ENCODE measurements at regions of chr5 and their contacts with region 1.

Region 1: GRCh38 chr5:56200856-56201666 is 32.1 kb downstream of the ANKRD55 start:
- DNase-seq: peak; percentile 78
- ATAC-seq: peak; percentile 91
- H3K4me3 ChIP-seq: no peak overlapping the region
- H3K27ac ChIP-seq: no peak overlapping the region
- H3K4me1 ChIP-seq: peaks cover 2% of the 10 kb centered on the region; the same call in 1 of the 2 replicates
- H3K27me3 ChIP-seq: no peaks in the 10 kb centered on the region
- CTCF ChIP-seq: peak; percentile 83
- POLR2A ChIP-seq: no peak
- RAD21 ChIP-seq: peak; percentile 98

Region 2: GRCh38 chr5:55344392-55344992 is 856.6 kb before region 1 on chr5:
- CTCF ChIA-PET with region 1: no interaction called
- POLR2A ChIA-PET with region 1: no interaction called
- dilution Hi-C with region 1: no loop called
- in situ Hi-C with region 1: no loop called
- intact Hi-C with region 1: loop called (anchors 1 kb)
- DNase-seq: peak; percentile 70
- ATAC-seq: peak; percentile 83
- H3K4me3 ChIP-seq: no peak overlapping the region
- H3K27ac ChIP-seq: no peak overlapping the region
- H3K4me1 ChIP-seq: no peaks in the 10 kb centered on the region
- H3K27me3 ChIP-seq: no peaks in the 10 kb centered on the region
- CTCF ChIP-seq: peak; percentile 86
- POLR2A ChIP-seq: no peak
- RAD21 ChIP-seq: peak; percentile 66

Region 3: DNA sequence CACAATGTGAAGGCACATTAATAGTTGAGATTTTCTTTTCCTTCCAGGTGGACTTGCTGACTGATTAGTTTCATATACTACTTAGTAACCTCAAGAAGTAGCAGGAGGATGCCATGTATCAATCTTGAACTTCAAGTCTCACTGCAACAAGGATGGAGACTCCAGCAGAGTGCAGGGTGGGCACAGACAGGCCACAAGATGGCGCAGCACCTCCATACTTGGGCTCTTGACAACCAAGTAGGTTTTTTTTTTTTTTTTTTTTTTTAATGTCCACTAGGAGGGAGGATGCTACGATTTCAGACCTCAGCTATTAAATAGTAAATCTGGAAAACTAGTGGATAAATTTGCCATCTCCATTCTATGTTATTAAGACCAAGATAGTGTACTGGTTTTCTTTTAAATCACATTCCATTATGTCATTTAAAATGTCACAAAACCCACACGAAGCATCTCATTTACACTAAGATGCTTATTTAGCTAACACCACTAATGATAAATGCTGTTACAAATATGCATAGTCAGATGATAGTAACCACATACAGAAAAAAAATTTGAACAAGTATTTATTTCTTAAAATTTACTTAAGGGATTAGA is 264.9 kb before region 1 on chr5:
- CTCF ChIA-PET with region 1: interaction called, 5 read pairs
- POLR2A ChIA-PET with region 1: no interaction called
- dilution Hi-C with region 1: no loop called
- in situ Hi-C with region 1: no loop called
- intact Hi-C with region 1: loop called (anchors 1 kb)
- DNase-seq: peak; percentile 92
- ATAC-seq: peak; percentile 74
- H3K4me3 ChIP-seq: no peak overlapping the region
- H3K27ac ChIP-seq: no peak overlapping the region
- H3K4me1 ChIP-seq: no peaks in the 10 kb centered on the region
- H3K27me3 ChIP-seq: no peaks in the 10 kb centered on the region
- CTCF ChIP-seq: peak; percentile 91
- POLR2A ChIP-seq: no peak
- RAD21 ChIP-seq: peak; percentile 83

Region 4: DNA sequence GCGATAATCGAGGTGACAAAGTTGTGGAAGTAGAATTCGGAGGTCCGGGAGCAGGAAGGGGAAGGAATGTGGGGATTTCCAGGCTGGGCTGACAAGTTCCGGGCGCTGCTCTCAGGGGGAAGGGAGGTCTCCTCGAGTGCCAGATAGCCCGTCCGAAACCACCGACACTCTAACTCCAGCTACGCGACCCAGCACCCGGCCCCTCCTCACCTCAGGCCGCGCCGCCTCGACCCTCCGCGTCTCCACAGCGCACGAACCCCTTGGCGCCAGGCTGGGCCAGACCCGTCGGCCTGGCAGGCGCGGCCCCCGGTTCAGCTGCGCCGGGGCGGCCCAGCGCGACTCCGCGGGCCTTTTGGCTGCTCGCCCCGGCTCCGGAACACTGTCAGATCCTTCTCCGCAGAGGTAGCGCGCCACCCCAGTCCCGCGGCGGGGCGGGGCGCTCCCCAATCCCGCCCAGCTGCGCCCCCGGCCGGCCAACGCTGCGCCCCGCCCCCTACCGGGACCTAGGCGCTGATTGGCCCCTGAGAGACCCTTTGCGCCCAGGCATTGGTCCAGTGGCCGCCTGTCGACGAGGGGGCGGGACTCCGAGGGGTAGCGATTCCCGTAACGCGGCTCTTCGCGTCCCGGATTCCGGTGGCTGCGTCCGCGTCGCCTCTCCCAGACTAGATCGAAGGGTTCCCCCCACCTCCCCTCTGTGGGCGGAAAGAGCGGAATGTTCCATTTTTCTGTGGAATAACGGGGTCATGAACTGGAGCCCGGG is 206.3 kb before region 1 on chr5 and contains the start of gene IL6ST:
- CTCF ChIA-PET with region 1: interaction called, 5 read pairs
- POLR2A ChIA-PET with region 1: no interaction called
- dilution Hi-C with region 1: no loop called
- in situ Hi-C with region 1: loop called (anchors 5 kb)
- intact Hi-C with region 1: loop called (anchors 2 kb)
- DNase-seq: peak; percentile 96
- ATAC-seq: peak; percentile 96
- H3K4me3 ChIP-seq: peak within 1 kb of the TSS; percentile 89
- H3K27ac ChIP-seq: peak within 1 kb of the TSS; percentile 100
- H3K4me1 ChIP-seq: peaks cover 3% of the 10 kb centered on the region; the same call in 1 of the 2 replicates
- H3K27me3 ChIP-seq: no peaks in the 10 kb centered on the region
- CTCF ChIP-seq: 0 out of 2 replicates have a peak, but pooled peaks have one; percentile 22
- POLR2A ChIP-seq: peak; percentile 95
- RAD21 ChIP-seq: no peak; the same call in 1 of the 2 replicates
- total RNA-seq, gene IL6ST: 506 and 533 TPM in 2 replicates

Region 5: DNA sequence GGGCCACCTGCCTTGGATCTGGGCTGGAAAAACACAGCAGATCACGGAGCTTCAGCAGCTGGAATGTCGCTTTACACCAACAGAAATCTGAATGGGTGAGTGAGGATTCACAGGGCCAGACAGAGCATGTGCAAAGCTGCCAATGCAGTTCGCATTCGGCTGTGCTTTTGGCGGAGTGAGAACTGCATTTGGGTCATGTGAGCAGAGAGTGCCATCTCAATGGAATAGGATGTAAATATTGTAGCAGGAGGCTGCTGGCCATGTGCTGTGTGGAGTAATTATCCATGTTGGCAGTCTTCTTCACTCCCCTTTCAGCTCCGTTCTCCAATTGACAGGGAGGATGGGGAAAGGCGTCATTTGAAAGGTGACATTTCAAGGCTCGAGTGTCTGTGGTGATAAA is 32.2 kb after region 1 on chr5 and contains the start of gene ANKRD55:
- CTCF ChIA-PET with region 1: no interaction called
- POLR2A ChIA-PET with region 1: no interaction called
- dilution Hi-C with region 1: no loop called
- in situ Hi-C with region 1: no loop called
- intact Hi-C with region 1: no loop called
- DNase-seq: no peak
- ATAC-seq: no peak; the same call in none of the 2 replicates
- H3K4me3 ChIP-seq: no peak within 1 kb of the TSS
- H3K27ac ChIP-seq: no peak within 1 kb of the TSS
- H3K4me1 ChIP-seq: peaks cover 2% of the 10 kb centered on the region; the same call in 1 of the 2 replicates
- H3K27me3 ChIP-seq: peaks cover 6% of the 10 kb centered on the region; the same call in 1 of the 2 replicates
- CTCF ChIP-seq: no peak
- POLR2A ChIP-seq: no peak
- RAD21 ChIP-seq: no peak
- total RNA-seq, gene ANKRD55: 0.28 TPM in 1 of 2 replicates, not detected in the other

Region 6: DNA sequence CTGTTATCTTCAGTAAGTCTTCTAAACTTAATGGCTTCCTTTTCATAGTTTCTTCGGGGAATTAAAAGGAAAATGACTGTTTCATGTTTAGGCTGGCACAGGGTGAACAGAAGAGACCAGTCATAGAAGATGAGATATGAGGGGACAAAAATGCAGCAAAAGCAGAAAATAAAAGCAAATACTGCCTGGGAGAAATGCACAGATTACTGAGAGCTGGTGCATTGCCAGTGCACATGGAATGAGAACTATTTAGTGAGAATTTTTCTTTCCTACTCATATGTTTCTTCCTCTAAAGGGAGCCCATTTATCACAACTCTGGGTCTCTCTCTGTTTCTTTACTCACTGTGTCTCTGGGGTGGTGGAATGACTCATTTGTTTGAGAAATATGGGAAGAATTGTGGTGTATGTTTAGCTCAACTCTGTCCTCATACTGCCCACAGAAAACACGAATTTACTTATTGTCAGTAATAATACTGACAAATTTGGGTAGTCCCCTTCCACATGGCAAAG is 58.0 kb after region 1 on chr5:
- CTCF ChIA-PET with region 1: interaction called, 3 read pairs
- POLR2A ChIA-PET with region 1: no interaction called
- dilution Hi-C with region 1: no loop called
- in situ Hi-C with region 1: no loop called
- intact Hi-C with region 1: loop called (anchors 2 kb)
- DNase-seq: peak; percentile 97
- ATAC-seq: peak; percentile 96
- H3K4me3 ChIP-seq: peak overlapping the region; percentile 17; the same call in 1 of the 2 replicates
- H3K27ac ChIP-seq: peak overlapping the region; percentile 91
- H3K4me1 ChIP-seq: peaks cover 12% of the 10 kb centered on the region
- H3K27me3 ChIP-seq: no peaks in the 10 kb centered on the region
- CTCF ChIP-seq: no peak
- POLR2A ChIP-seq: no peak
- RAD21 ChIP-seq: no peak

Region 7: GRCh38 chr5:57137401-57137800 is 936.3 kb after region 1 on chr5:
- CTCF ChIA-PET with region 1: no interaction called
- POLR2A ChIA-PET with region 1: no interaction called
- dilution Hi-C with region 1: no loop called
- in situ Hi-C with region 1: no loop called
- intact Hi-C with region 1: no loop called
- DNase-seq: no peak
- ATAC-seq: no peak
- H3K4me3 ChIP-seq: no peak overlapping the region
- H3K27ac ChIP-seq: no peak overlapping the region
- H3K4me1 ChIP-seq: no peaks in the 10 kb centered on the region
- H3K27me3 ChIP-seq: peaks cover 1% of the 10 kb centered on the region; the same call in 1 of the 2 replicates
- CTCF ChIP-seq: no peak
- POLR2A ChIP-seq: no peak
- RAD21 ChIP-seq: no peak

Region 8: GRCh38 chr5:57468481-57469163 is 1267.6 kb after region 1 on chr5:
- CTCF ChIA-PET with region 1: no interaction called
- POLR2A ChIA-PET with region 1: no interaction called
- dilution Hi-C with region 1: no loop called
- in situ Hi-C with region 1: no loop called
- intact Hi-C with region 1: no loop called
- DNase-seq: peak; percentile 85
- ATAC-seq: peak; percentile 72
- H3K4me3 ChIP-seq: no peak overlapping the region
- H3K27ac ChIP-seq: peak overlapping the region; percentile 26; the same call in 1 of the 2 replicates
- H3K4me1 ChIP-seq: peaks cover 3% of the 10 kb centered on the region; the same call in 1 of the 2 replicates
- H3K27me3 ChIP-seq: no peaks in the 10 kb centered on the region
- CTCF ChIP-seq: no peak
- POLR2A ChIP-seq: no peak
- RAD21 ChIP-seq: no peak

Measured in IMR-90 (cell line).